Naive thymus-derived CD4-positive, alpha-beta T cell (primary cell): ENCODE measurements at regions of chr17 and their contacts with region 1.

Region 1: DNA sequence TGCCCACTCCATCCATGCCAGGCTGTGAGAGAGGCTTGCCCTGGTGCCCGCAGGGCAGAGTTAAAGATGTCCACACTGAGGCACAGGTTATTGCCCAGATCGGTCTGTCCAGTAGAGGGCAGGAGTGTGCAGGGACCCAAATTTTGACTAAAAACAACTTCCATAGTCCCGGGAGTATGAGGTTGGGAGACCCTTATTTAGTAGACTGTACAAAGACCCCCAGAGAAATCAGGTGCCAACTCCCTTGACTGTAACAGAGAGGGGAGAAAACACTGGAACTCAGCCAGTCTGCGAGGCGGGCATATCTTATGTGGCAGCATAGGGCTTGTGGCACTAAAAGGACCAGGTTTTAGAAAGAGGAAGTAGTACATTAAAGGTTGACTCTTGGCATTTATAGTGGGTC is 43.4 kb downstream of the HNF1B start:
- DNase-seq: peak in 7 of 9 donors; percentile 8 to 57 (median 14)
- ATAC-seq: peak; percentile 81
- H3K4me3 ChIP-seq: no peak overlapping the region
- H3K4me3 Mint-ChIP-seq: peak overlapping the region in 6 of 10 donors; percentile 5 to 67 (median 40)
- H3K27ac ChIP-seq: no peak overlapping the region
- H3K27ac Mint-ChIP-seq: no peak overlapping the region
- H3K4me1 ChIP-seq: no peaks in the 10 kb centered on the region
- H3K4me1 Mint-ChIP-seq: peaks cover 0 to 20% (median 5%) of the 10 kb centered on the region in 7 donors
- H3K27me3 ChIP-seq: no peaks in the 10 kb centered on the region
- H3K27me3 Mint-ChIP-seq: peaks cover 14 to 37% (median 23%) of the 10 kb centered on the region in 5 donors

Region 2: DNA sequence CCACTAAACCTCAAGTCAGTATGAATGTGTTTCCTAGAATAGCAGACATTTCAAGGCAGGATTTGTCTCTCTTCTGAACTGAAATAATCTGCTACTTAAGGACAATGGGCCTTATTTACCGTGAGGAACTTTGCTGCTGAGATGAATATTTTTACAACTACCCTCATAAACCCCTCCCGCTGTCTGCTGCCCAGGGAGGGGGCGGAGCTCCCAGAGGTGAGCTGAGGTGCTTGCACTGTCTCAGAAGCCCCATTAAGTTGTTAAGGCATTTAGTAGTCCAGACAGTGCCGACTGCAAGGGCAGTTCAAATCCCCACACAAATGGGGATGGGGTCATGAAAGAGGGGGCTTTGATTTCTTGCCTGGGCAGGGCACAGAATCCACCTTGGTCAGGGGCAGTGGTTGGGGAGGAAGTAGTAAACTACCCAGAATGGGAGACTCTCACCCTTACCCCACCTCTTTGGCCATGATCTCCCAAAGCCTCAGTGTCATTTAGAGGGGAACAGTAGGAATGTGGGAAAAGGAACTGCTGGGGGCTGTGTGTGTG is 24.2 kb after region 1 on chr17:
- CTCF ChIA-PET with region 1: no interaction called
- POLR2A ChIA-PET with region 1: no interaction called
- intact Hi-C with region 1: no loop called
- DNase-seq: no peak
- ATAC-seq: no peak
- H3K4me3 ChIP-seq: no peak overlapping the region
- H3K4me3 Mint-ChIP-seq: no peak overlapping the region
- H3K27ac ChIP-seq: no peak overlapping the region
- H3K27ac Mint-ChIP-seq: no peak overlapping the region
- H3K4me1 ChIP-seq: no peaks in the 10 kb centered on the region
- H3K4me1 Mint-ChIP-seq: no peaks in the 10 kb centered on the region
- H3K27me3 ChIP-seq: no peaks in the 10 kb centered on the region
- H3K27me3 Mint-ChIP-seq: peaks cover 0 to 8% (median 5%) of the 10 kb centered on the region in 5 donors

Region 3: GRCh38 chr17:37752482-37752881 is 51.0 kb after region 1 on chr17:
- CTCF ChIA-PET with region 1: no interaction called
- POLR2A ChIA-PET with region 1: no interaction called
- intact Hi-C with region 1: loop called in 1 of 2 experiments (anchors 5 kb)
- DNase-seq: no peak
- ATAC-seq: no peak
- H3K4me3 ChIP-seq: no peak overlapping the region
- H3K4me3 Mint-ChIP-seq: no peak overlapping the region
- H3K27ac ChIP-seq: no peak overlapping the region
- H3K27ac Mint-ChIP-seq: no peak overlapping the region
- H3K4me1 ChIP-seq: no peaks in the 10 kb centered on the region
- H3K4me1 Mint-ChIP-seq: peaks cover 0 to 27% (median 0%) of the 10 kb centered on the region in 7 donors
- H3K27me3 ChIP-seq: no peaks in the 10 kb centered on the region
- H3K27me3 Mint-ChIP-seq: peaks cover 14 to 35% (median 18%) of the 10 kb centered on the region in 5 donors

Region 4: GRCh38 chr17:37770631-37771518 is 69.4 kb after region 1 on chr17:
- CTCF ChIA-PET with region 1: no interaction called
- POLR2A ChIA-PET with region 1: no interaction called
- intact Hi-C with region 1: loop called in 1 of 2 experiments (anchors 5 kb)
- DNase-seq: peak in 4 of 9 donors; percentile 5 to 11 (median 9)
- ATAC-seq: peak; percentile 34
- H3K4me3 ChIP-seq: no peak overlapping the region
- H3K4me3 Mint-ChIP-seq: peak overlapping the region in 1 of 10 donors; percentile 14
- H3K27ac ChIP-seq: no peak overlapping the region
- H3K27ac Mint-ChIP-seq: peak overlapping the region in 1 of 9 donors; percentile 9
- H3K4me1 ChIP-seq: peaks cover 0 to 5% of the 10 kb centered on the region in 2 donors
- H3K4me1 Mint-ChIP-seq: peaks cover 0 to 49% (median 3%) of the 10 kb centered on the region in 7 donors
- H3K27me3 ChIP-seq: no peaks in the 10 kb centered on the region
- H3K27me3 Mint-ChIP-seq: peaks cover 14 to 26% (median 18%) of the 10 kb centered on the region in 5 donors

Region 5: GRCh38 chr17:37791447-37792399 is 90.2 kb after region 1 on chr17:
- CTCF ChIA-PET with region 1: no interaction called
- POLR2A ChIA-PET with region 1: no interaction called
- intact Hi-C with region 1: loop called in 1 of 2 experiments (anchors 1 kb)
- DNase-seq: peak in 7 of 9 donors; percentile 19 to 39 (median 22)
- ATAC-seq: peak; percentile 64
- H3K4me3 ChIP-seq: no peak overlapping the region
- H3K4me3 Mint-ChIP-seq: no peak overlapping the region
- H3K27ac ChIP-seq: no peak overlapping the region
- H3K27ac Mint-ChIP-seq: no peak overlapping the region
- H3K4me1 ChIP-seq: no peaks in the 10 kb centered on the region
- H3K4me1 Mint-ChIP-seq: peaks cover 0 to 6% (median 0%) of the 10 kb centered on the region in 7 donors
- H3K27me3 ChIP-seq: no peaks in the 10 kb centered on the region
- H3K27me3 Mint-ChIP-seq: peaks cover 12 to 29% (median 21%) of the 10 kb centered on the region in 5 donors

Region 6: DNA sequence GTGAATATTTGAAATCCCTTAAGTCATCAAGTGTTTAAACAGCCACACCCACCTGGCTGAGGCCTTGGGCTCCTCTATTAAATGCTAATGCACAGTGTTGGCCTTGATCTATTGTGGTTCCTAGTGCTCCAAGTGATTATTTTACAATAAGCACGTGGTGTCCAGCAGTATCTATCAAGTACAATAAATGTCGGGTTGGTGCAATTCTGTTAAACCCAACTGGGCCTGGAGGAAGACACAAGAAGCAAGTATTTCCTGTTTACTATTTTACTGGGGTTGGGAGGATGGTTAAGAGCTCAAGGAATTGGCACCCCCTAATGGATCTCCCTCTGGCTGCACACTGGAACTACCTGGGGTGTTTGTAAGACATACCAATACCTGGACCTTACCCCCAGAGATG is 115.5 kb after region 1 on chr17:
- CTCF ChIA-PET with region 1: no interaction called
- POLR2A ChIA-PET with region 1: no interaction called
- intact Hi-C with region 1: loop called in 1 of 2 experiments (anchors 1 kb)
- DNase-seq: no peak
- ATAC-seq: no peak
- H3K4me3 ChIP-seq: no peak overlapping the region
- H3K4me3 Mint-ChIP-seq: peak overlapping the region in 1 of 10 donors; percentile 48
- H3K27ac ChIP-seq: no peak overlapping the region
- H3K27ac Mint-ChIP-seq: no peak overlapping the region
- H3K4me1 ChIP-seq: no peaks in the 10 kb centered on the region
- H3K4me1 Mint-ChIP-seq: peaks cover 0 to 23% (median 0%) of the 10 kb centered on the region in 7 donors
- H3K27me3 ChIP-seq: no peaks in the 10 kb centered on the region
- H3K27me3 Mint-ChIP-seq: peaks cover 15 to 36% (median 24%) of the 10 kb centered on the region in 5 donors

Region 7: DNA sequence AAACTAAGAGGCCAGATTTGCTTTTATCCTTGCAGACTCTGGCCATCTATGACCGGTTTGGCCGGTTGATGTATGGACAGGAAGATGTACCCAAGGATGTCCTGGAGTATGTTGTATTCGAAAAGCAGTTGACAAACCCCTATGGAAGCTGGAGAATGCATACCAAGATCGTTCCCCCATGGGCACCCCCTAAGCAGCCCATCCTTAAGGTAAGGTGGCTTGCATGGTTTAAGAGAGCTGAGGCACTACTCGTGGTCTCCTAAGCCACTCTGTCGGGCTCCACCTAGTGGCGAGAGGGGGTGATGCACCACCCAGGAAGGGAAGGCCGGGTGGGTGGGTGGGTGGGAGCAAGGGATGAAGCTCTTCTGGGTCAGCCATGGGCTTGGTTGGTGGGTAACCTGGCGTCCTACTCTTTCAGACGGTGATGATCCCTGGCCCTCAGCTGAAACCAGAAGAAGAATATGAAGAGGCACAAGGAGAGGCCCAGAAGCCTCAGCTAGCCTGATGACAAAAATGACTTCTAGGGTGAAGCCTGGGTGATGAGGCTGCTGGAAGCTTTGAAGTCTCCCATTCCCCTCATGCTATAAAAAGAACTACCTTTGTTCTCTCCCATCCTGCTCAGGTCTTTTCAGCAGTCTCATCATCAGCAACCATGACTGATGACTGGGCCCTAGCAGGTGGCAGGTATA is 620.7 kb after region 1 on chr17:
- CTCF ChIA-PET with region 1: no interaction called
- POLR2A ChIA-PET with region 1: no interaction called
- intact Hi-C with region 1: loop called in 1 of 2 experiments (anchors 5 kb)
- DNase-seq: peak; percentile 43 to 76 (median 58)
- ATAC-seq: peak; percentile 90
- H3K4me3 ChIP-seq: no peak overlapping the region
- H3K4me3 Mint-ChIP-seq: no peak overlapping the region
- H3K27ac ChIP-seq: no peak overlapping the region
- H3K27ac Mint-ChIP-seq: no peak overlapping the region
- H3K4me1 ChIP-seq: no peaks in the 10 kb centered on the region
- H3K4me1 Mint-ChIP-seq: peaks cover 4 to 15% (median 9%) of the 10 kb centered on the region in 7 donors
- H3K27me3 ChIP-seq: no peaks in the 10 kb centered on the region
- H3K27me3 Mint-ChIP-seq: no peaks in the 10 kb centered on the region